Common myeloid progenitor, CD34-positive (primary cell): ENCODE measurements at regions of chr15 and their contacts with region 1.

Region 1: DNA sequence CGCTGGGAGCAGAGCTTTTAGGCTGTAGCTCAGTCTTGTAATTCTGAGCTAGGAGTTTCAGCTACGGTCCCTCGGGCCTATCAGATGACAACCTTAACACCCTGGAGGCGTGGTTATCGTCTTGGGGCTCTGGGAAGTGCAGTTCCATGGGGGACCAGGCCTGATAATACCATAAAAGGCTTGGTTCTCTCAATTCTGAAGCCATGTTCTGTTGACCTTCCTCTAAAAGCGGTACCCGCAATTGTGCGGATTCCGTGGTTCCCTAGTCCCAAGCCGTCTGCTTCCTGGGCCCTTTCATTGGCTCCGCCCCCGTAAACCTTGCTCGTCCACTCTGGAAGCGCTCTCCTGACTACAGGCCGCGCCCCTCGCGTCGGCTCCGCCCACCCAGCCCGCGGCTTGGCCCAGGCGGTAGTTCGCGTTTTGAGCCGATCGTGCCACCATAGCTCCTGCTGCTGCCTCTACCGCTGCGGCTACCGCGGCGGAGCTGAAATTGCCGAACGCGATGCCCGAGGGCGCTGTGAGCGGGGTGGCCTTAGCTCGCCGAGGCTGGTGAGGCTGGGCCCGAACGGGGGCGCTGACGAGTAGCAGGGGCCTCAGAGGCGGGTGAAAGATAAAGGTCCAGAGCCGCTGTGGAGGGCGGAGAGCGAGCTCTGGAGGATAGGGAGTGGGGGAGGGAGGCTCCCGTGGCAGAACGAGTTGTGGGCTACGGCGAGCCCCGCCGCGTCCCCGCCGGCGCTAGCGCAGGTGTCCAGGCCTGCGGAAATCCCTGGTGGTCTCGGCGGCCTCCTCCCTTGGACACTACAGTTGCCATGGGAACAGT is at the start of gene MAPKBP1:
- DNase-seq: peak; percentile 99
- H3K4me3 ChIP-seq: peak within 1 kb of the TSS; percentile 67 to 93 (median 82)
- H3K27ac ChIP-seq: peak within 1 kb of the TSS; percentile 75 to 87
- H3K4me1 ChIP-seq: peaks cover 24 to 53% (median 43%) of the 10 kb centered on the region in 4 experiments
- H3K27me3 ChIP-seq: no peaks in the 10 kb centered on the region

Region 2: DNA sequence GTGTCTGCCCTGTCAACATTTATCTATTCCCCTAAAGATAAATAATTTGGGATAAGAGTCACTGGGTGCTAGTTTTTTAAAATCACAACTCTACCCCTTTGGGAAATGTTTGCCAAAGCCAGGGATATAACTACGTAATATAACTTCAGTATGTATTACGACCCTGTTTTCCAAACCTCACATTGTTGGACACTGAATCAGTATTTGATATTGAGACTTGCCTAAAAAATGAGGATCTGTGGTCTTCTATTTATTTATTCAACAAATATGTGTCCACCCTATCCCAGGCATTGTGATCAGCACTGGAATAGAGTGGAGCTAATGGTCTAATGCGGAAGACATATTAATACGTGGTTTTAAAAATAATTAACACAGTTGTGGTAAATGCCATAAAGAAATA is 118.6 kb before region 1 on chr15:
- CTCF ChIA-PET with region 1: no interaction called
- POLR2A ChIA-PET with region 1: no interaction called
- DNase-seq: no peak
- H3K4me3 ChIP-seq: no peak overlapping the region
- H3K27ac ChIP-seq: no peak overlapping the region
- H3K4me1 ChIP-seq: peaks cover 0 to 20% (median 10%) of the 10 kb centered on the region in 4 experiments
- H3K27me3 ChIP-seq: no peaks in the 10 kb centered on the region

Region 3: GRCh38 chr15:41790756-41791546 is 16.7 kb after region 1 on chr15:
- CTCF ChIA-PET with region 1: interaction called, 44 read pairs
- POLR2A ChIA-PET with region 1: no interaction called
- DNase-seq: peak in 2 of 3 donors; percentile 78 to 86
- H3K4me3 ChIP-seq: peak overlapping the region in 4 of 7 experiments; percentile 12 to 55 (median 36)
- H3K27ac ChIP-seq: peak overlapping the region; percentile 67 to 83
- H3K4me1 ChIP-seq: peaks cover 17 to 65% (median 56%) of the 10 kb centered on the region in 4 experiments
- H3K27me3 ChIP-seq: no peaks in the 10 kb centered on the region

Region 4: DNA sequence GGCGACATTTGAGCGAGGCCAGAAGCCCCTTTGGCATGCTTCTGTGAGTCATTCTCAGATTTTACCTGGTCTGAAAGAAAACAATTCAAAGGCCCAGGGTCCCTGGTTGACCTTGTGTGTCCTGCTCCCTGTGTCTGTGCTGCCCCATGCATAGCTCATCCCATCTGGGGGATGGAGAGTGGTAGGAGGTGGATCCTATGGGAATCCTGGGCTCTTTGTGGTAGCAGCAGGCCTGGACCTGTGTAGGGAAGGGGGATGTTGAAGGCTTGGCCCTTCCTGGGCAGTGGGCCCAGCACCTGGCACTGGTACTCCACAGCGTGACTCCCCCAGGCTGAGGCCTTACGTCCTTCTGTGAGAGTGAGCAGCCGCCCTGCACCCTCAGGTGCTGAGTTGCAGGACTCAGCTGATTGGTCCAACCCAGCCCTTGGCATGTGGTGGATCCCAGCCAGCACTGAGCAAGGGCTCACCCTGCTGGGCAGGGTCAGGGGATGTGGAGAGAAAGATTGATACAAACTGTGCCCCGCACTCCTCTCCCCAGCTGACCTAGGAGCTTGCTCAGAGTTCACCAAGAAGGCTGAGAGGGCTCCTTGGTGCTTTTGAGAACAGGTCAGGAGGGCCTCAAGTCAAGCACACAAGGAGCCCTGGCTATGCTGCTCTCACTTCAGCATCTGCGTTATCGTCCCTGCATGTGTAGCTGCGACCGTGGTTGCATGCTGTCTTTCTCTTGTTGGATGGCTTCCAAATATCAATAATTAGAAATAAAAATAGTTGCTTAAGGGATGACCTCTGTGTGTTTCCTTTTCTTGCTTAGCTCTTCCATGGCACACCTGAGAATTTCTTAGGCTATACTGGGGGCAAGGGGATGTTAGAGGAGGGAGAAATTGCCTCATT is 32.3 kb after region 1 on chr15:
- CTCF ChIA-PET with region 1: interaction called, 319 read pairs
- POLR2A ChIA-PET with region 1: interaction called, 24 read pairs
- DNase-seq: peak in 1 of 3 donors; percentile 26
- H3K4me3 ChIP-seq: no peak overlapping the region
- H3K27ac ChIP-seq: peak overlapping the region in 1 of 2 experiments; percentile 90
- H3K4me1 ChIP-seq: peaks cover 0 to 54% (median 44%) of the 10 kb centered on the region in 4 experiments
- H3K27me3 ChIP-seq: no peaks in the 10 kb centered on the region

Region 5: DNA sequence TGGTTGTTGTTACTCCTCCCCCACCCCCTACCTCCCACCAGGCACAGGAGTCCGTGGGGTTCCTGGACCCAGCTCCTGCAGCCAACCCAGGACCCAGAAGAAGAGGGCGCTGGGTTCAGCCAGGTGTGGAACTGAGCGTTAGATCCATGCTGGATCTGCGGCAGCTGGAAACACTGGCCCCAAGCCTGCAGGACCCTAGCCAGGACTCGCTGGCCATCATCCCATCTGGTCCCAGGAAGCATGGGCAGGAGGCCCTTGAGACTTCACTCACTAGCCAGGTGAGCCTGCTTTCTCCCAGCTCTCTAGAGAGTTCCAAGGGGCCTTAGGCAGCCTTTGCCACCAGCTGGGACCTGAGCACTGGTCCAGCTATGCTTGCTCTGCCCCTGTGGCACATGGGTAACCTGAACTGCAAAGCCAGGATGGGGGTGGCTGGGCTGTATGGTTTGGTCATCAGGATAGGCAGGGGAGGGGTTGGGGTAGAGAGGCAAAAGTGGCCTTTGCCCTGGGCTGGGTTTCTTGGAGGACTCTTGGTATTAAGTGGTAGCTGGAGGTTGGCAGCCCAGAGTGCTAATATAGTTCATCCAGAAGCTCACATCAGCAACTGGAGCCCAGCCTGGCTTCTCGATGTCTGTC is 46.6 kb after region 1 on chr15:
- CTCF ChIA-PET with region 1: interaction called, 11 read pairs
- POLR2A ChIA-PET with region 1: no interaction called
- DNase-seq: no peak
- H3K4me3 ChIP-seq: no peak overlapping the region
- H3K27ac ChIP-seq: no peak overlapping the region
- H3K4me1 ChIP-seq: no peaks in the 10 kb centered on the region
- H3K27me3 ChIP-seq: no peaks in the 10 kb centered on the region

Region 6: DNA sequence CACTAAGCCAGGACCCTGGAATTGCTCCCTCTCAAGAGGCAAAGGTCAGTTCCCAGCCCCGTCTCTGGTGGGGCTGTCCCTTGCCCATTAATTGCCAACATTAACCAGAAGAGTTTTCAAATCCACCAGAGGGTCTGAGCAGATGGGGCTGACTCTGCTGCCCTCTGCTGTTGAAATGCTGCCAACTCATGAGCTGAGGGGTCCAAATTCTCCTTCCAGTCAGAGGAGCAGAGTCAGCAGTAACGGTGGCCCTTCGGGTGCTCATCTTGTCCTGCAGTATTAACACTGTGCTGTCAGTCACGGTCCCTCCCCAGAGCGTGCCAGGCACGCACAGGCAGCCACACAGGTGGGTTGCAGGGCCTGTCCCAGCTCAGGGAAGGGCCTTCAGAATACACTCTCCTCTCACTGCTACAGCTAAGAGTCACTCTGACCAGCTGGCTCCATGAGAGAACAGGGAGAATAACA is 130.3 kb after region 1 on chr15:
- CTCF ChIA-PET with region 1: interaction called, 85 read pairs
- POLR2A ChIA-PET with region 1: no interaction called
- DNase-seq: peak; percentile 64 to 82 (median 70)
- H3K4me3 ChIP-seq: no peak overlapping the region
- H3K27ac ChIP-seq: no peak overlapping the region
- H3K4me1 ChIP-seq: peaks cover 0 to 26% (median 10%) of the 10 kb centered on the region in 4 experiments
- H3K27me3 ChIP-seq: no peaks in the 10 kb centered on the region